Ascending aorta (tissue), 2 donors: ENCODE measurements at regions of chr11 and their contacts with region 1.

Region 1: DNA sequence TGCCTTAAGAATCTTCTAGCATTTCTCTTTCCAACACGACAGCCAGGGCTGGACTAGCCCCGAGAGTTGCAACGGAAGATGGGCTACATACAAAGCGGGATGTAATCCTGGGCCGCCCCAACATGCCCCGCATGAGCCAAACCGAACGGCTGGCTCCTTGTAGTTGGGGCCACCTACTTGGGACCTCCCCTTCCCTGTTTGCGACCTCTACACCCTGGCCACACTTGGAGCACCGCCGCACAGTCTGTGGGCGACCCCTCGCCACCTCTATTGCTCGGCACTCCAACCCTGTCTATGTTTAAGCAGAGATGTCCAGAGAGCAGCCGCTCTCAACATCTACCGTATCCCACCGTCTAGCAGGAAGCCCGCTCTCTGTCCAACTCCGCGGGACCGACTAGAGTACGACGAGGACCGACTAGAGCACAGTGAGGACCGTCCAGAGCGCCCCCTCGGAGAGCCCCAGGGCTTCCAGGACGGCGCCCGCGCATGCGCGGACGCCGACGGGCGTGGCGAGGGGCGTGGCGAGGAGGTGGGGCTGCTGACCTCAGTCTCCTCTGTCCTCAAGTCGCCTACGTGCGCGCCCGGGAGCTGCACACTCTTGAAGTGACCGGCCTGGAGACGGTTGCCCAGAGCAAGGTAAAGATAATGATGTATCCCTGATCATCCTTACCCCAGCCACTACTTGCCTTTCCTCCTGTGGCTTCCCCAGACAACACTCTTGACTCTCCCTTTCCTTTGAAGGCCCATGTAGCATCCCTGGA is 32.3 kb downstream of the NEAT1 start:
- DNase-seq: peak in 1 of 2 donors; percentile 95
- H3K4me3 ChIP-seq: peak overlapping the region; percentile 60 to 67
- H3K27ac ChIP-seq: peak overlapping the region; percentile 87 to 94
- H3K4me1 ChIP-seq: peaks cover 9 to 19% of the 10 kb centered on the region in 2 donors
- H3K27me3 ChIP-seq: no peaks in the 10 kb centered on the region
- CTCF ChIP-seq: no peak

Region 2: GRCh38 chr11:65471410-65471762 is 16.5 kb after region 1 on chr11:
- intact Hi-C with region 1: loop called (anchors 1 kb)
- DNase-seq: peak; percentile 57 to 93
- H3K4me3 ChIP-seq: peak overlapping the region; percentile 41 to 54
- H3K27ac ChIP-seq: peak overlapping the region; percentile 97 to 98
- H3K4me1 ChIP-seq: peaks cover 19 to 35% of the 10 kb centered on the region in 2 donors
- H3K27me3 ChIP-seq: no peaks in the 10 kb centered on the region
- CTCF ChIP-seq: peak; percentile 63 to 67 (median 64)

Region 3: DNA sequence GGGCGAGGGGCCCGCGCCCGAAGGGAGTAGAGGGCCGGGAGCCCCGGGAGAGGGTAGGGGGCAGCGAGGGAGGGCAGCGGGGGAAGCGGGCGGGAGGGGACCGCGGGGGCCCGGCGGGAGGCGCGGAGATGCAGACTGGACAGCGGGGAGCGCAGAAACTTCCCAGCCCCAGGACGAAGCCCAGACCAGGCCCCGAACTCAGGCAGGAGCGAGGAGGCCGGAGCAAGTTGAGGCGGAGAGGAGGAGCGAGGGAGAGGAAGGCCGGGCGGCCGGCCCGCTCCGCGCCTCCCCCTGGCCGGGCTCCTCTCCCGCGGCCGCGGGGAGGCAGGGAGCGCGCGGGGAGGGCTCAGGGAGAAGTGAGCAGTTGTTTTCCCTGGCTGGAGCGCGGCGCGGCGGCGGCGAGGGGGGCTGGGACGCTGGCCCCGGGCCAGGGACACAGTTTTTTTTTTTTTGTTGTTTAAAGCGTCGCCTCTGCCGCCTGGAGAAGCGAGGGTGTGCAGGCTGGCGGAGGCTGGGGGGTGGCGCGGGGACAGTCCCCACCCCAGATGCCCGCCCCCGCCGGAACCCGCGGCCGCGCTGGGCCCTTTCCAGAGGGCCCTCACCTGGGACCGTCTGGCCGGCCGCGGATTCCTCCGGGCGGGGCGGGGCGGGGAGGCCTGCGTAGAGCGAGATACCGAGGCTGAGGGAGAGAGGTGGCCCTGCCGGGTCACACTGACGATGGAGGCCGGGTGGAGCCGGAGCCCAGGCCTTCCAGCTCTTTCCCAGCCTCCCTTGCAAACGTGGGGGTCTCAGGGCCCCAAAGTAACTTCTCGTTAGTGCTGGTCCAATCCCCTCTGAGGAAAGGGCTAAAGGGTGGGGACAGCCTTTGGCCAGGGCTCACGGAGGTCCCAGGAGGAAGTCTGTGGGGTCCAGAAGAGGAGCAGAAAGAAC is 103.4 kb after region 1 on chr11 and contains the start of gene LTBP3:
- intact Hi-C with region 1: no loop called
- DNase-seq: peak in 1 of 2 donors; percentile 93
- H3K4me3 ChIP-seq: peak within 1 kb of the TSS; percentile 79 to 82
- H3K27ac ChIP-seq: peak within 1 kb of the TSS; percentile 97 to 99
- H3K4me1 ChIP-seq: peaks cover 26 to 69% of the 10 kb centered on the region in 2 donors
- H3K27me3 ChIP-seq: no peaks in the 10 kb centered on the region
- CTCF ChIP-seq: no peak
- total RNA-seq, gene LTBP3: 702 TPM